Activated T-helper 1 cell treated with anti-CD3 and anti-CD28 coated beads, Interleukin-12 subunit alpha, Interleukin-12 subunit beta, Interleukin-2, Interleukin-4 antibody, amounts not matched to agents 30 ng/mL and 10 ng/mL and 1 ng/mL, durations not matched to agents 14 hours and 24 hours and 36 hours (primary cell): ENCODE measurements at regions of chr13 and their contacts with region 1.

Region 1: GRCh38 chr13:27079421-27079958 is 92.1 kb downstream of the USP12 start:
- DNase-seq: no peak
- H3K4me3 Mint-ChIP-seq: no peak overlapping the region
- H3K27ac Mint-ChIP-seq: no peak overlapping the region
- H3K4me1 Mint-ChIP-seq: peaks cover 11% of the 10 kb centered on the region
- H3K27me3 Mint-ChIP-seq: no peaks in the 10 kb centered on the region

Region 2: DNA sequence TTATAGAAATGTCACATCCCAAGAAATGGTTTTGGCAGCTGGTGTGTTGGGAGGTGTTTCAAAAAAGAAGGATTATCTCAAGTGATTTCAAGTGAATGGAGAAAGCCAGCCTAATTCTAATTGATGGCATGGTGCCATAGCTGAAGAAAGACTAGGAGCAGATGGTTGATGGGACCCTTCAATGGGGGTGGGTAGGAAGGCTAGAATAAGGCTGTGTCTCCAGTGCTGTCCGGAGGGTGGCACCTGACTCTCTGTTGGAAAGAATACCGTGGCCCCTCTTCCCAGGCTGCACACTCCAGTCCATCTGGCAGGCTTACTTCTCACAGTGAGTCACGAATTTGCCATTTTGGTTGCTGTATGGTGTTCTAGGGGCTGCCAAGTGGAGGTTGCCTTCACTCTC is 267.9 kb before region 1 on chr13:
- intact Hi-C with region 1: no loop called
- DNase-seq: no peak
- H3K4me3 Mint-ChIP-seq: no peak overlapping the region
- H3K27ac Mint-ChIP-seq: no peak overlapping the region
- H3K4me1 Mint-ChIP-seq: no peaks in the 10 kb centered on the region
- H3K27me3 Mint-ChIP-seq: peaks cover 7% of the 10 kb centered on the region

Region 3: GRCh38 chr13:26977556-26977955 is 101.9 kb before region 1 on chr13:
- intact Hi-C with region 1: no loop called
- DNase-seq: no peak
- H3K4me3 Mint-ChIP-seq: no peak overlapping the region
- H3K27ac Mint-ChIP-seq: no peak overlapping the region
- H3K4me1 Mint-ChIP-seq: peaks cover 3% of the 10 kb centered on the region
- H3K27me3 Mint-ChIP-seq: no peaks in the 10 kb centered on the region

Region 4: GRCh38 chr13:27117158-27117557 is 37.7 kb after region 1 on chr13:
- intact Hi-C with region 1: loop called (anchors 5 kb)
- DNase-seq: no peak
- H3K4me3 Mint-ChIP-seq: no peak overlapping the region
- H3K27ac Mint-ChIP-seq: no peak overlapping the region
- H3K4me1 Mint-ChIP-seq: peaks cover 52% of the 10 kb centered on the region
- H3K27me3 Mint-ChIP-seq: no peaks in the 10 kb centered on the region